GM13976 (cell line): ENCODE measurements at regions of chr9 and their contacts with region 1.

Region 1: DNA sequence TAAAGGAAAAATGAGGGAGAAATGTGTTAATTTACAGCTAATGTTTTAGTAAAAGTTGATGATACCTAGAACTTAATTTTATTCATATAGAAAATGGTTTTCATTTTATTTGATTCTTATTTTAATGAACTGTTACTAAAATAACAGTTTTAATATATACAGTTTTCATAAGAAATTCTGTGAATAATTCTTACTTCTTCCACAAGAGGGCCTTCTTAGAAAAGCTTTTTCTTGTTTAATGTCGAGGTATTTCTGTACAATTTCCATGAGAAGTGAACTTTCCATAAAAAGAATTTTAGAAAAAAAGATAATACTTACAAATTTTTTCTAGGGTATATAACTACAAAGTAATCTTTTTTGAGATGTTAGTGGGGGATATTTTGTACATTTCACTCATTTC is 73.9 kb downstream of the KLF9 start:
- DNase-seq: peak; percentile 32
- CTCF ChIP-seq: no peak

Region 2: GRCh38 chr9:70278312-70278711 is 62.3 kb before region 1 on chr9:
- in situ Hi-C with region 1: no loop called
- DNase-seq: no peak
- CTCF ChIP-seq: no peak

Region 3: DNA sequence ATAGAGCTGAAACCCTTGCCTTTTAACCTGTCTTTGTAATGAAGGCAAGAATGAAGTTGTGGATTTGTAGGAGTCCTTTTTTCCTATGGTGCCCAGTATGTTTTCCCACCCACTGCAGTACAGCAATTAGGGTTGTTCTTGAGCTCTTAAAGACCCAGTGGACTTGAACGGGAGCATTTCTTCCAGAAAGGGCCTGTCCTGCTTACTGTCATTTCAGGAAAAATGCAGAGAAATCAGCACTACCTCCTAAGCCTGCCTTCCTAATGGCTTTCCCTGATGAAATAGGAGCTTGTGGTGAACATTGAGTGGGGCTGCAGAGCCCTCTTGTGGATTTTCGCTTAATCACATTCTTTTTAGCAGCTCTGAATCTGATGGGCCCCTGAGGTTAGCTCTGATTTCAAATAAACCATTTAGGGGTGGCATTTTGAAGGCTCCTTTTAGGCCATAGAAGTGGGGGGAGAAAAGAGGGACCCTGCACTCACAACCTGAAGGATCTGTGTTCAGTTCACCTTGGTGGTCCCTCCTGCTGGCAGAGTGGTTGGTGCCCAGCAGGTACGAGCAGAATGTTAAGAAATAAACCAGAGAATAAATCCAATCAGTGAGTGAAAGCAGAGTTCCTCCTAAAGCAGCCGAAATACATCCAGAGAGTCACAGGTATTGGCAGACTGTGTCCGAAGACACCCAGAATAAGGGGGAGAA is 261.9 kb after region 1 on chr9:
- in situ Hi-C with region 1: loop called (anchors 10 kb)
- DNase-seq: peak; percentile 58
- CTCF ChIP-seq: peak; percentile 53

Region 4: GRCh38 chr9:70868661-70869652 is 528.4 kb after region 1 on chr9:
- in situ Hi-C with region 1: no loop called
- DNase-seq: no peak
- CTCF ChIP-seq: no peak